PC-3 (cell line): ENCODE measurements at regions of chr9 and their contacts with region 1.

Region 1: DNA sequence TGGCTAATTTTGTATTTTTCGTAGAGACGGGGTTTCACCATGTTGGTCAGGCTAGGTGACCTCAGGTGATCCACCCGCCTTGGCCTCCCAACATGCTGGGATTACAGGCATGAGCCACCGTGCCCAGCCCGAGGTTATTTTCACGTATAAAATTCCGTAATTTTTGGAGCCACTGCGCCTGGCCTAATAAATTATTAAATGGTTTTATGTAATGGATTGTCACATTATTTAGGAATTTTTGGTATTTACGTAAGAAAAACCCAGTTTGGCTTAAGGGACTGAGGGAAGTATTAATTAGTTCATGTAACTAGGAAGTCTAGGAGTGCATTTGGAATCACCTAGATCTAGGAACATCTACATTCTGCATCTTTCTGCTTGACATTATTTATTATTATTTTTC is 8.3 kb downstream of the GLE1 start:
- DNase-seq: no peak
- ATAC-seq: no peak
- H3K4me3 ChIP-seq: no peak overlapping the region
- H3K27ac ChIP-seq: no peak overlapping the region
- H3K4me1 ChIP-seq: no peaks in the 10 kb centered on the region
- H3K27me3 ChIP-seq: no peaks in the 10 kb centered on the region
- CTCF ChIP-seq: no peak

Region 2: DNA sequence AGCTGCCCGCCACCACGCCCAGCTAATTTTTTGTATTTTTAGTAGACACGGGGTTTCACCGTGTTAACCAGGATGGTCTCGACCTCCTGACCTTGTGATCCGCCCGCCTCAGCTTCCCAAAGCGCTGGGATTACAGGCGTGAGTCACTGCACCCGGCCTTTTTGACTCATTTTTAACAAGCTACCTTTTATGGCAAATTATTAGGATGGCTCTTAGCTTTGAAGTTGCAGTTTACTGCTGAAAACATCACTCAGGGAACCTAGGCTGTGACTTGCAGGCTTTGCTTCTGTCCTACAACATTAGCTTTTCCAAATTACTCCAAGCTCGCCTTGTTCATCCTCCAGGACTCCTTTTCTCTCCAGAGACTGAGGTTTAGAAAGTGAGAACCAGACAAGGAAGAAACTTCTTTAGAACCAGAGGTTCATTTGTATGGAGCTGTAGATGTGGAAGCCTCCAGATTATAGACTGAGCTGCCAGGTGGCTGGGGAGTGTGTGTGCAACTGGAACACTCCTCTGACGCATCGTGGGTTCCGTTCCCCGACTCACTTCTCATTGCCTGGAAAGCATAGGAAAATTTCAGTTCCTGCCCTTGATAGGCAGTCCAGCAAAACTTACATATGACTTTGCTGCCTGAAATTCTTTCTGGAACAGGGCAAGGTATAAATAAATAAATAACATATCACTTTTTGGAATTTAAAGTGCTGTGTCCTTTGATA is 15.8 kb after region 1 on chr9:
- CTCF ChIA-PET with region 1: interaction called, 14 read pairs
- POLR2A ChIA-PET with region 1: interaction called, 14 read pairs
- intact Hi-C with region 1: no loop called
- DNase-seq: peak; percentile 62
- ATAC-seq: peak; percentile 72
- H3K4me3 ChIP-seq: no peak overlapping the region
- H3K27ac ChIP-seq: peak overlapping the region; percentile 60
- H3K4me1 ChIP-seq: peaks cover 12% of the 10 kb centered on the region
- H3K27me3 ChIP-seq: no peaks in the 10 kb centered on the region
- CTCF ChIP-seq: no peak

Region 3: GRCh38 chr9:128798896-128799295 is 286.1 kb after region 1 on chr9:
- CTCF ChIA-PET with region 1: no interaction called
- POLR2A ChIA-PET with region 1: no interaction called
- intact Hi-C with region 1: no loop called
- DNase-seq: no peak
- ATAC-seq: no peak
- H3K4me3 ChIP-seq: no peak overlapping the region
- H3K27ac ChIP-seq: no peak overlapping the region
- H3K4me1 ChIP-seq: no peaks in the 10 kb centered on the region
- H3K27me3 ChIP-seq: no peaks in the 10 kb centered on the region
- CTCF ChIP-seq: no peak

Region 4: GRCh38 chr9:129270903-129271431 is 758.1 kb after region 1 on chr9:
- CTCF ChIA-PET with region 1: no interaction called
- POLR2A ChIA-PET with region 1: no interaction called
- intact Hi-C with region 1: no loop called
- DNase-seq: no peak
- ATAC-seq: no peak
- H3K4me3 ChIP-seq: no peak overlapping the region
- H3K27ac ChIP-seq: no peak overlapping the region
- H3K4me1 ChIP-seq: no peaks in the 10 kb centered on the region
- H3K27me3 ChIP-seq: no peaks in the 10 kb centered on the region
- CTCF ChIP-seq: no peak